Ascending aorta (tissue), 2 donors: ENCODE measurements at regions of chr18 and their contacts with region 1.

Region 1: GRCh38 chr18:48538531-48539405 is at the start of gene CTIF:
- DNase-seq: peak; percentile 96 to 99
- H3K4me3 ChIP-seq: peak within 1 kb of the TSS; percentile 82 to 87
- H3K27ac ChIP-seq: peak within 1 kb of the TSS; percentile 94 to 95
- H3K4me1 ChIP-seq: peaks cover 0 to 7% of the 10 kb centered on the region in 2 donors
- H3K27me3 ChIP-seq: no peaks in the 10 kb centered on the region
- CTCF ChIP-seq: no peak
- total RNA-seq, gene CTIF: 55.3 TPM

Region 2: DNA sequence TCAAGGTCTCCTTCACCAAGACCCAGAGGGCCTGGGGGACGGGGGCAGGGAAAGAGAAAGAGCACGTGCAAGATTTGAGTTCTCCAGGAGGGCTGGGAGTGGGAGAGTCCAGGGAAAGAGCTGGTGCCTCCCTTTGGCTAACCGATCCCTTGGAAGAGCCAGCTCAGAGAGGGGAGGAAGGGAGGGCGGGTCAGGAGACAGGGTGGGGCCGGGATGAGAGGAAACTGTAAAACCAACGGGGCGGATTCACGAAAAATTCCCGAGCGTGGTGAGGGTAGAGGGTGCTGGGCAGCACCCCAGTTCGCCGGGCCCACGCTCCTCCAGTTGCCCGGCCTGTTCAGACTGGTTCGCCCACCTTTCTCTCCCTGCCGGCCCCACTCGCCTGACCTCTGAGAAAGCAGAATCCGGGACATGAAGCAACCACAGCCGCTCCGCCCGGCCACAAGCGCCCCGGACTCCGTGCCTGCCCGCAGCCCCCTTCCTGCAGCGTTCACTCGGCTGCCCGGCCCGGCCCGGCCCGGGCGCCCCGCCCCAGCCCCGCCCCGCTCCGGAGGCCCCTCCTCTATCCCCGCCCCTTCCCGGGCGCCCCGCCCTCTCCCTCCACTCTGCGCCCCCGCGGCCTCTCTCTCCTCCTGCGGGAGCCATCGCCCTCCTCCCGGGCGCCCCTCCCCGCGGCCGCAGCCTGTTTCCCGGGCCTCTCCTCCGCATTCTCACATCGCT is 377.4 kb before region 1 on chr18:
- intact Hi-C with region 1: loop called (anchors 5 kb)
- DNase-seq: peak in 1 of 2 donors; percentile 88
- H3K4me3 ChIP-seq: peak overlapping the region; percentile 67 to 93
- H3K27ac ChIP-seq: peak overlapping the region; percentile 86 to 94
- H3K4me1 ChIP-seq: peaks cover 2 to 12% of the 10 kb centered on the region in 2 donors
- H3K27me3 ChIP-seq: no peaks in the 10 kb centered on the region
- CTCF ChIP-seq: no peak

Region 3: DNA sequence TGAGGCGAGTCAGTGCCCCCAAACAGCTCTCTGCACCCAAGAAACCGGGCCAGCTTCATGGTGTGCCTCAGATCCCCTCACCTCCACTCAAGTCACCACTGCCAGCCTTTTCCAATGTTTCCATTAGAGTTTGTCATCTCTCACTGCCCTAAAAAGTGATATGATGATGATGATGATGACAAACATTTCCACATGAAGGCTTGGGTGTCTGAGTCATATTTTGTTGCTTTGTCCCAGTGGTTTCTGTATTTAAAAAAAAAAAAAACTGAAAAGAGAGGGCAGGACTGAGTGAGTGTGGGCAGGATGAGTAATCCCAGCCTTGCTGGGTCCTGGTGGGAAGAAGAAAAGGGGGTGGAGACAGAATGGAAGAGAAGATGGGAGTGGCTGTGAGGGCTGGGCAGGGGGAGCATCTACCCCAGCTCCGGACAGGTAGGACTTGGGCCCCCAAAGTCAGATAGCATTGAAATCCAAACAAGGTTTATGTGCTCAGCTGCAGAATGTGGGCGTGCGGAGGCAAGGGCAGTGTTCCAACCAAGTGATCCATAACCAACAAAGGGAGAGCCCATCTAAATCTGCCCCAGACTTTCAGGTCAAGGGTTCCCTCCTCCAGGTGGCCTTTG is 208.3 kb before region 1 on chr18:
- intact Hi-C with region 1: no loop called
- DNase-seq: no peak
- H3K4me3 ChIP-seq: no peak overlapping the region
- H3K27ac ChIP-seq: peak overlapping the region; percentile 24 to 58
- H3K4me1 ChIP-seq: peaks cover 7 to 19% of the 10 kb centered on the region in 2 donors
- H3K27me3 ChIP-seq: no peaks in the 10 kb centered on the region
- CTCF ChIP-seq: no peak

Region 4: DNA sequence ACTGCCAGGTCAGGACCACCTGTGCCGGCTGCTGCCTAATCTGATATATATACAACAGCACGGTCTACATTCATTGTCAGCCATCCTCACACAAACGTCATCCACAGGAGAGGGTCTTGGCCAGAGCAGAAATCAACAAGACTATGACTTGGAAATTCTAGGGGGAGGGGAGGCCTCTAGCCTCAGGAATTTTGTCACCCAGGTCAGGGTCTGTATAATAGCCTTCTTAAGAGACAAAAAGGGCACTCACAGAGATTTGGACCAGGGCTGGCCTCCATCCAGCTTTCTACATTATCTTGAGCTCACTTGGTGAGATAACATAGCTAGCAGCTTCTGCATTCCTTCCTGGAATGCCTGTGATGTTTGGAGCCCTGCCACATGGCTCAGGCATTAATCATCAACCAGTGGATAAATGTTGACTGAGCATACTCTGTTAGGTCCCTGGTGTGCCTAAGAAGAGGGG is 50.3 kb before region 1 on chr18:
- intact Hi-C with region 1: loop called (anchors 2 kb)
- DNase-seq: peak in 1 of 2 donors; percentile 91
- H3K4me3 ChIP-seq: no peak overlapping the region
- H3K27ac ChIP-seq: no peak overlapping the region
- H3K4me1 ChIP-seq: peaks cover 3 to 17% of the 10 kb centered on the region in 2 donors
- H3K27me3 ChIP-seq: no peaks in the 10 kb centered on the region
- CTCF ChIP-seq: no peak

Region 5: DNA sequence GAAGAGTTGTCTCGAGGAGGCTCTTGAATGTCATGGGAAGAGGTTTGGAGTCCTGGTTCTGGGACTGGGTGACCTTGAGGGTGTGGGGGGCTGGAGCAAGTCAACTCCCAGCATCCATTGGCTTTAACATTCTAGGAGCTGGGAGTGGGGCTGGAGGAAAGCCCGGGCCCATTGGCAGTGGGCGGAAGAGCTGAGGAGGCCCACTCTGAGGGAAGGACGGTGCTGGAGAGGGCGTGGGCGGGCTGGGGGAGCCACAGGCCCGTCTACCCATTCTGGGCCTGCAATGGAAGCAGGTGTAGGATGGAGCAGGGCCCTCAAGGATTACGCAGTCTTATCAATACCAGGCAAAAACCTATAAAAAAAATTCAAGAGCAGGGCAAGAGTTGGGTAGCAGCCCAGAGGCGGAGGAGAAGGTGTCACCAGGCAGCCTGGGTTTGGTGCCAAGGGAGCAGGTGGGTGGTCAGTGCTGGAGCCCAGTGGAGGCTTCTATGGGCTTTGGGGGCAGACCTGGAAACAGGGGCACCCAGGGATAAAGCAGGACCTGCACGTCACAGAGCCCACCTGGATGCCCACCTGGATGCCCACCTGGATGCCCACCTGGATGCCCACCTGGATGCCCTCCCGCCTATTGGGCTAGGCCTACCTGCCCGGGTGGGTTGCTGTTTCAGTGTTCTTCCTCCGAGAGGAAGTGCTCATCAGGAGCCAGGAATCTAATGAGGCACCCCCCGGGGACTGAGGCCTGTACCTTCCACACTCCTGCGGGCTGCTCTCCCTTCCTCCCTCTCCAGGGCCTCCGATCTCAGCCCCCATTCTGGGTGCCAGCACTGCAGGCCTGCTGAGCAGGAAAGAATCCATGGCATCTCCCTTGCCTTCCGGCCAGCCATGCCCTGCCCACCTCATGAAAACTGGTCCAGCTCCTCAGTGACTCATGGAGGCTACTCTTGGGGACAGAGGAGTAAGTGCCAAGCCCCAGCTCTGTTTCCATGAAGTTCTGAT is 71.3 kb after region 1 on chr18:
- intact Hi-C with region 1: loop called (anchors 2 kb)
- DNase-seq: peak in 1 of 2 donors; percentile 89
- H3K4me3 ChIP-seq: no peak overlapping the region
- H3K27ac ChIP-seq: peak overlapping the region; percentile 89
- H3K4me1 ChIP-seq: peaks cover 17 to 50% of the 10 kb centered on the region in 2 donors
- H3K27me3 ChIP-seq: no peaks in the 10 kb centered on the region
- CTCF ChIP-seq: no peak

Region 6: GRCh38 chr18:48663931-48664847 is 125.4 kb after region 1 on chr18:
- intact Hi-C with region 1: loop called (anchors 2 kb)
- DNase-seq: peak in 1 of 2 donors; percentile 86
- H3K4me3 ChIP-seq: no peak overlapping the region
- H3K27ac ChIP-seq: no peak overlapping the region
- H3K4me1 ChIP-seq: peaks cover 0 to 6% of the 10 kb centered on the region in 2 donors
- H3K27me3 ChIP-seq: no peaks in the 10 kb centered on the region
- CTCF ChIP-seq: peak; percentile 81 to 93 (median 91)

Region 7: DNA sequence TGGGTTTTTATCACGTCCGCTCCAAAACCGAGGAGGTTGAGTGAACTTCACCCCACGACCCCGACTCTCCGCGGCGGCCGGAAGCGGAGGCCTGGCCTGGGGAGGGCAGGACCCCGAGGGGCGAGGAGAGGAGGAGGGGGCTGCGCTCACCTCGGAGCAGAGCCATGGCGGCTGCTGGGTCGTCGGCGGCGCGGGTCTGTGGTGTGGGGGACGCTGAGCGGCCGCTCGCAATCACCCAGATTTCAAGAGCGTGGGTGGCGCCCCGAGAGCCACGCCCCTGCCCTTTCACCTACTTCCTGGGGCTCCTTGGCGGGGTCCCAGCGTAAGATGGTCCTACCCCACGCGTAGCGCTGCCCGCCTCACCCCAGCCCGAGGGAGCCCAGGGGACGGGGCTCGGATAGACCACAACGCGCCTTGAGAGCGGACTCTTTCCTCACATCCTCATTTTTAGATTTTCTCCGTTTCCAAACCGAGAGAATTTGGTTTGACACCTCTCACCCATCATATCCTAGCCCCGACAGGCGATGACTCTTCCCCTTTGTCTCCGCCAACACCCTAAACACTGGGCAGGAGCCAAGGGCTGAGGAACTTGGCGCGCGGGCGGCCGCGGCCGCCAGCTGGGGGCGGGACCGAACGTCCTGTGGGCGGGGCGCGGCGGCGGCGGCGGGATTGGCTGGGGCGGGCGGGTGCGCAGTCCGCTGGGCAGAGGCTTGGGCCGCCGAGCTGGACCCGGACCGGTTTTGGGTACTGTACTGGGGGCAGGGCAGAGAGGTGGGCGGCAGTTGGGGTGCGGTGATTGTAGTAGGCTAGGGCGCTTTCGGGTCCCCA is 1274.8 kb after region 1 on chr18 and contains the start of gene ACAA2:
- intact Hi-C with region 1: loop called (anchors 5 kb)
- DNase-seq: peak; percentile 51 to 92
- H3K4me3 ChIP-seq: peak within 1 kb of the TSS; percentile 79
- H3K27ac ChIP-seq: peak within 1 kb of the TSS; percentile 94 to 98
- H3K4me1 ChIP-seq: peaks cover 7 to 10% of the 10 kb centered on the region in 2 donors
- H3K27me3 ChIP-seq: no peaks in the 10 kb centered on the region
- CTCF ChIP-seq: no peak
- total RNA-seq, gene ACAA2: 33.4 TPM